ENCODE measurements at regions of chr16 and their contacts with region 1.

Region 1: DNA sequence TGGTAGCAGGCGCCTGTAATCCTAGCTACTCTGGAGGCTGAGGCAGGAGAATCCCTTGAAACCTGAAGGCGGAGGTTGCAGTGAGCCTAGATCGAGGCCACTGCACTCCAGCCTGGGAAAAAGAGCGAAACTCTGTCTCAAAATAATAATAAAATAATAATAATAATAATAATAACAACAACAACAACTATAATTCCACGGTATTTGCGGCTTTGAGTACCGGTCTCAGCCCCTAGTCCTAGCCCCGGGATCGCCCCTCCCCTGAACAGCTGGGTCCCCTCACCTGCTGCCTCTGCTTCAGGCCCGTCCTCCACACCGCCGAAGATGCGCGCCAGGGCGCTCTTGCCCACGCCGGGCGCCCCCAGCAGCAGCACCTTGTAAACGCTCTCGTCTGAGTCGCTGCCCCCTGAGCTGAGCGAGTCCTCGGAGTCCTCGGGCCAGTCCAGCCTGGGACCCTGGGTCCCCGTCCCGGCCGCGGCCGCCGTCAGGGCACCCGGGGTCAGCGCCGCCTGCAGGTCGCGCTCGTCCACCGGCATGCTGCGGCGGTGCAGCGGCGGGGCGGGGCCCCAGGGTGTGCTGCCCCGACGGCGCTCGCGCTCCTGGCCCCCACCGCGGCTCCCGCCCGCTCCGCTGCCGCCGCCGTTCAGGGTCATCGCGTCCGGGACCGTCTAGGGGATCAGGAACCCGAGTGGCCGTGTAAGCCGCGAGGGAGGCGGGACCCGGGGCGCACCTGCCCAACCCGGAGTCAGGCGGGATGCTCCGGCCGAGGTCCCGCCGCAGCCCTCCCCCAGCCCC is 611 bp downstream of the RRAD start:
- DNase-seq: peak; percentile 52
- ATAC-seq: peak; percentile 75
- H3K4me3 Mint-ChIP-seq: peak overlapping the region; percentile 53
- H3K27ac Mint-ChIP-seq: no peak overlapping the region
- H3K4me1 Mint-ChIP-seq: peaks cover 22% of the 10 kb centered on the region
- H3K27me3 Mint-ChIP-seq: peaks cover 34% of the 10 kb centered on the region

Region 2: DNA sequence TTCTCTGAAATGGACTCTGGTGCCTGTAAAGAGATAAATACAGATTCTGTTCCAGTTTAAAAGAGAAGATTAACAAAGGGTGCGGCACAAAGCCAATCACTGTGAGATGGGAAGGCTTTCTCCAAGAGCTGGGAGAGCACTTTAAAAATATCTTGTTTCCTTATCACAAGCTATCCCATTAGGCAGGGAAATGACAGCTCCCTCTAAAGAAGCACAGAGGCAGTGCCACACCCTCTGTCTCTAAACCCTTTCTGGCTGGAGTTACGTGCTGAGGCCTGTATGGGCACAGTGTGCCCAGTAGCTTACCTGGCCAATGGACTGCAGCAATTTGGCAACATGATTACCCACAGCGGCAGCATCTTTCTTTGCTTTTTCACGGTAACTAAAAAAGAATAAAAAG is 114.3 kb before region 1 on chr16:
- CTCF ChIA-PET with region 1: no interaction called
- POLR2A ChIA-PET with region 1: no interaction called
- DNase-seq: no peak
- ATAC-seq: no peak
- H3K4me3 Mint-ChIP-seq: no peak overlapping the region
- H3K27ac Mint-ChIP-seq: no peak overlapping the region
- H3K4me1 Mint-ChIP-seq: no peaks in the 10 kb centered on the region
- H3K27me3 Mint-ChIP-seq: no peaks in the 10 kb centered on the region

Region 3: GRCh38 chr16:66880288-66881013 is 44.3 kb before region 1 on chr16 and contains the start of gene PDP2:
- CTCF ChIA-PET with region 1: interaction called, 20 read pairs
- POLR2A ChIA-PET with region 1: no interaction called
- DNase-seq: peak; percentile 95
- ATAC-seq: peak; percentile 98
- H3K4me3 Mint-ChIP-seq: peak within 1 kb of the TSS; percentile 100
- H3K27ac Mint-ChIP-seq: peak within 1 kb of the TSS; percentile 98
- H3K4me1 Mint-ChIP-seq: peaks cover 65% of the 10 kb centered on the region
- H3K27me3 Mint-ChIP-seq: no peaks in the 10 kb centered on the region
- total RNA-seq, gene PDP2: 24.2 to 26.9 TPM

Region 4: DNA sequence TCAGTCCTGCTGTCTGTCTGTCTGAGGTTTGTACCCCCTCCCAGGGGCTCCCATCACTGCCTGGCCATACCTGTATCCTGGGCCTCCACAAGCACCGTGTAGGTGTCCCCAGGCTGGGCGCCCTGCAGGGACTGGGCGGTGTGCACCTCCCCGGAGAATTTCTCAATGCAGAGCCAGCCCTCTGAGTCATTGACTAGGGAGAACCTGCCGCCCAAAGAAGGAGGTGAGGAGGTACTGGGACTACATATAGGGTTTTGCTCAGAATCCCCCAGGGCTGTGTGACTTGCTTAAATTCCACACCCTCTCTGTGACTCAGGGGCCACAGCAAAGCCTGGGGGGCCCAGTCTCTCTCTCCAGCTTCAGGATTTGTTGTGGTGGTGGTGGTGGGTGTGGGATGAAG is 13.6 kb before region 1 on chr16:
- CTCF ChIA-PET with region 1: interaction called, 19 read pairs
- POLR2A ChIA-PET with region 1: interaction called, 3 read pairs
- DNase-seq: no peak
- ATAC-seq: no peak
- H3K4me3 Mint-ChIP-seq: no peak overlapping the region
- H3K27ac Mint-ChIP-seq: no peak overlapping the region
- H3K4me1 Mint-ChIP-seq: peaks cover 2% of the 10 kb centered on the region
- H3K27me3 Mint-ChIP-seq: no peaks in the 10 kb centered on the region

Region 5: DNA sequence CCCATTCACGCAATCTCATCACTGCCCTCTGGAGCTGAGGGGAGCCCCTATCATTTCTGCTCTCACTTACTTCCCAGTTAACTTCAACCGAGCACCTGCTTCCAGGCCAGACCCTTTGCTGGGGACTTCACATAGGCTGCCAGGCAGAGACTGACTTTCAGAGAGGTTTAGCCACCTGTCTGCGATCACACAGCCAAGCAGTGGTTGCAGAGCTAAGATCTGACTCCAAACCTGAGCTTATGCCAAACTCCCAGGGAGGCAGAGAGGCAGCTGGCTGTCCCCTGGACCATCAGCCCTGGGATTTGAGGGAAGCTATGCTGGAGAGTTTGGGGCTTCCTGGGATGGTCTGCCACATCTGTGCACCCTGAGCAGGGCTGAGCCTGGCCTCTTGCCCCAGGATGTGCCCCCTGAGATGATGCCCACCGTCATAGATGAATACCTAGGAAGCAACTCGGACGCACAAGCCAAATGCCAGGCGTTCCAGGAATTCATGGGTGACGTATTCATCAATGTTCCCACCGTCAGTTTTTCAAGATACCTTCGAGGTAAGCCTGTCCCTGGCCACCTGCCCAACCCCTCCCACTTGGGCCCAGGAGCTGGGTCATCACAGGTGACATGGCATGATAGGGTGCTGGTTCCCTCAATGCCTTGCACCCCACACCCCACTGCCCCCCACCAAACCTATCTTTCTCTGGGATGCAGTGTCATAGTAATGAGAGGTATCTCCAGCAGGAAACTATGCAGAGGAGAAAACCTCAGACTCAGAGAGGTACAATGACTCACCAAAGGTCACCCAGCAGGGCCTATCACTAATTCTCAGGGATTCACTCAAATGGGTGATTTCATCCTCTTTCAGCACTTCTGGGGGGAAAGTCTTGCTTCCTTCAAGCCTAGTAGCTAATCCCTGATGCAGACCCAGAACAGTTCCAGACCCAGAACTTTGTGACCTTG is 46.3 kb after region 1 on chr16:
- CTCF ChIA-PET with region 1: no interaction called
- POLR2A ChIA-PET with region 1: no interaction called
- DNase-seq: no peak
- ATAC-seq: no peak
- H3K4me3 Mint-ChIP-seq: no peak overlapping the region
- H3K27ac Mint-ChIP-seq: no peak overlapping the region
- H3K4me1 Mint-ChIP-seq: peaks cover 15% of the 10 kb centered on the region
- H3K27me3 Mint-ChIP-seq: no peaks in the 10 kb centered on the region

Measured in activated CD8-positive, alpha-beta T cell treated with anti-CD3 and anti-CD28 coated beads, Interleukin-2, amount 10 ng/mL, durations not matched to agents 7 days and 5 days (primary cell).